AG04450 (cell line): ENCODE measurements at regions of chr3 and their contacts with region 1.

Region 1: GRCh38 chr3:138417559-138417982 is 16.8 kb upstream of the ESYT3 start:
- DNase-seq: peak; percentile 67
- H3K4me3 ChIP-seq: no peak overlapping the region
- H3K27ac ChIP-seq: no peak overlapping the region
- H3K27me3 ChIP-seq: peaks cover 7% of the 10 kb centered on the region
- CTCF ChIP-seq: peak; percentile 98

Region 2: GRCh38 chr3:138347960-138348753 is 69.4 kb before region 1 on chr3 and contains the start of gene MRAS:
- CTCF ChIA-PET with region 1: interaction called, 14 read pairs
- POLR2A ChIA-PET with region 1: no interaction called
- DNase-seq: peak; percentile 43
- H3K4me3 ChIP-seq: peak within 1 kb of the TSS; percentile 82
- H3K27ac ChIP-seq: peak within 1 kb of the TSS; percentile 70
- H3K27me3 ChIP-seq: no peaks in the 10 kb centered on the region
- CTCF ChIP-seq: peak; percentile 47
- polyA plus RNA-seq, gene MRAS: 58.3 and 59.1 TPM in 2 replicates

Region 3: DNA sequence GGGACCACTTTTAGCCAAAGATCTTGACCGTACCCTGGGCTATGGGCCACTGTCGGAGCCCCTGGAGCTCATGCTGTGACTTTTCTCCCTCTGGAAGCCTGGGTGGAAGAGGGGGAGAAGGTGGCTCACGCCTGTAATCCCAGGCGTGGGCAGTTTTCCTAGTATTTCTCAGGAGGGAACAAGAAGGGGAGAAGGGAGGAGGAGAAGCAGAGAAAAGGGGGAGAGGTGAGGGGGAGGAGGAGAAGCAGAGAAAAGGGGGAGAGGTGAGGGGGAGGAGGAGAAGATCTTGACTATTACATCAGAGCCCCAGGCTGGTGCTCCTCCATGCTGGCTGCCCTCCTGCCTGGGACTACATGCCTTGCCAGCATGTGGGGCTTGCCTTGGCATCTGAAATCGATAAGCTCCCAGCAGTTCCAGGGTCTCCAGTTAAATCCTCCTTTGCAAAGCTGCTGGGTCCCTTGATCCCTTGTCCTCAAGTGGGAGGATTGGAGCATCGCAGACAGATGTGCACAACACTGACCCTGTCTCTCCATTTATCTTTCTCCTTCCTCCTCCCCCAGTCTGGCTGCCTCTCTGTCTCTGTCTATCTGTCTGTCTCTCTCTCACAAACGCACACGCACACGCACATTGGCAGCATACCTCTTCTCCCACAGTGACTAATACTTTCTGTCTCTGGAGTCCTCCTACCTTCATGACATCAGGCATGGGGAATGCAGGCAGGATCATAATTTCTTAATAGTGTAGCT is 27.6 kb before region 1 on chr3:
- CTCF ChIA-PET with region 1: interaction called, 17 read pairs
- POLR2A ChIA-PET with region 1: no interaction called
- DNase-seq: peak; percentile 81
- H3K4me3 ChIP-seq: peak overlapping the region; percentile 20; the same call in 1 of the 2 replicates
- H3K27ac ChIP-seq: peak overlapping the region; percentile 84
- H3K27me3 ChIP-seq: no peaks in the 10 kb centered on the region
- CTCF ChIP-seq: no peak

Region 4: GRCh38 chr3:138440121-138440551 is 22.6 kb after region 1 on chr3:
- CTCF ChIA-PET with region 1: interaction called, 19 read pairs
- POLR2A ChIA-PET with region 1: interaction called, 4 read pairs
- DNase-seq: no peak
- H3K4me3 ChIP-seq: no peak overlapping the region
- H3K27ac ChIP-seq: no peak overlapping the region
- H3K27me3 ChIP-seq: peaks cover 42% of the 10 kb centered on the region
- CTCF ChIP-seq: no peak

Region 5: DNA sequence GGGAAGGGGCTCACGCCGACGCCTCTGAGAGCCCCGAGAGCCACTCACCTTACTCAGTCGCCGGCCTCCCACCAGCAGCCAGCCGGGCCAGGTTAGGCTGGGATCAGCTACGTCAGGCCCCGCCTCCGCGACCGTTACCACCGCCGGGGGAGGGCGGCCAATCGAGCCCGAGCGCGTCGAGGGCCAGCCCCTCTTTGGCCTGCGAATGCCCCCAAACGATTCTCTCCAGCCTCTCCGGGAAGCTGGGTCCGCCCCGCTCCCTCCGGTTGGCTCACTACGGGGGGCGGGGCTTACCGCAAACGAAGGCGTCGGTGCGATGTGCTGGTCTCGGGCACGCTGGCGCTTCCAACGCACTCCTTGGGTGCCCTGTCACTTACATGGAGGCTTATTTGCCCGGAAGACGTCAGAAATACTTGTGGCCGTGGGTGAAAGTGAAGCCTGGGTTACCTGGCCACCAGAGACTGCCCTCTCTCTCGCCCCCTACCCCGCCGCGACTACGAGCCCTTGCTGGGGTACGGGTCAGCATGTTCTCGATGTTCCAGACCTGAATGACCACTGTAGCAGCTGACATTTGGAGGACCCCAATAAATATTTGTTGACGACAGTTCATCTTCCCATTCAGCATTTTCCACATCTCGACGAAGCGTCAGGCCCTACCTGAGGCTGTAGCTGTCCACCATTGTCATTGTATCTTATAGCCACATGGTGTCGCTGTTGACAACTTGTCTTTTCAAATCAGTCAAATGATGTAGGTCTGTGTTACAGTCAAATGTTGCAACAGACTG is 176.8 kb after region 1 on chr3 and contains the start of gene CEP70:
- CTCF ChIA-PET with region 1: interaction called, 16 read pairs
- POLR2A ChIA-PET with region 1: no interaction called
- DNase-seq: peak; percentile 85
- H3K4me3 ChIP-seq: peak within 1 kb of the TSS; percentile 98
- H3K27ac ChIP-seq: peak within 1 kb of the TSS; percentile 75
- H3K27me3 ChIP-seq: no peaks in the 10 kb centered on the region
- CTCF ChIP-seq: peak; percentile 80
- polyA plus RNA-seq, gene CEP70: 9.8 and 14.6 TPM in 2 replicates

Region 6: DNA sequence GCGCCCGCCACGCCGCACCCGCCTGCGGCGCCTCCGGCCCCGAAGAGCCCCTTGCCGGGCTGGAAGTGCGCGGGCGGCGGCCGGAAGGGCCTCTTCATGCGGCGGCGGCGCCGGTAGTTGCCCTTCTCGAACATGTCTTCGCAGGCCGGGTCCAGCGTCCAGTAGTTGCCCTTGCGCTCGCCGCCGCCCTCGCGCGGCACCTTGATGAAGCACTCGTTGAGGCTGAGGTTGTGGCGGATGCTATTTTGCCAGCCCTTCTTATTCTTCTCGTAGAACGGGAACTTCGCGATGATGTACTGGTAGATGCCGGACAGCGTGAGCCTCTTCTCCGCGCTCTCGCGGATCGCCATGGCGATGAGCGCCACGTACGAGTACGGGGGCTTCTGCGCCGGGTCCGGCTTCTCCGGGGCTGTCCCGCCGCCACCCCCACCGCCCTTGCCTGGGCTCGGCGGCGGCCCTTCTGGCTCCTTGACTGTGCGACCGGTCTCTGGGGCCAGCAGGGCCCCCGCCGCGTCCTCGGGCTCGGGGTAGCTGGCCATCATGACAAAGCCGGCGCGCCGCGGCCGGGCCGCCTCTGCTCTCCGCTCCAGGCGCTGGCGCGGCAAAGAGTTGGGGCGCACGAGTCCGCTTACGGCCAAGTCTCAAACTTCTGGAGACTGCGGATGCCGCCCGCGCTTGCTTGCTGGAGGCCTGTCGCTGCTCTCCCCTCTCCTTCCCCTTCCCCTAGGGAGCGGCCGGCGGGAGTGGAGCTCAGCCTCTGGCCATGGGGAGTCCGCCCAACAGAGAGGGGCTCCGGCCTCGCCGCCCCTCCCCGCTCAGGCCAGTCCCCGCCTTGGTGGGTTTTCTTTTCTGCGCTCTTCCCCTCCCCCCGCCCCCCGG is 528.8 kb after region 1 on chr3:
- CTCF ChIA-PET with region 1: no interaction called
- POLR2A ChIA-PET with region 1: no interaction called
- DNase-seq: no peak
- H3K4me3 ChIP-seq: peak overlapping the region; percentile 47
- H3K27ac ChIP-seq: no peak overlapping the region
- H3K27me3 ChIP-seq: peaks cover 94% of the 10 kb centered on the region
- CTCF ChIP-seq: 0 out of 2 replicates have a peak, but pooled peaks have one; percentile 15